OCI-LY7 (cell line): ENCODE measurements at regions of chr3 and their contacts with region 1.

Region 1: DNA sequence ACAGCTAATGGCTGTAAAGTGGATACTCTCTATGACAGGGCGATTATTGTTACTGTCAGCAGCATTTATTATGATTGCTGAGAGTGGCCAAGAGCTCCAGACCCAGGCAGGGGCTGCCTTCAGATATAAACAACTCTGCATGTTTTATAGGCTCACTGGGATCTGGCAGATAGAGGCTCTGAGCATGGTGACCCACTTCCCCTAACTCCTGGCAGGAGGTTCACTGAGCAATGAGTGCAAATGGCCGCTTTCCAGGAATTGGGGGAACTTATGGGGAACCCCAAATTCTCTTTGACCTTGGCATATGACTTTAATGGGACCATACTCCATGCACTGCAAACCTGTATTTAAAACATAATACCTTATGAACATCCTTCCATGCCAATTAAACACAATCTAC is 59.0 kb downstream of the SCN5A start:
- DNase-seq: no peak
- H3K4me3 ChIP-seq: no peak overlapping the region
- H3K27ac ChIP-seq: no peak overlapping the region
- H3K4me1 ChIP-seq: no peaks in the 10 kb centered on the region
- CTCF ChIP-seq: no peak

Region 2: DNA sequence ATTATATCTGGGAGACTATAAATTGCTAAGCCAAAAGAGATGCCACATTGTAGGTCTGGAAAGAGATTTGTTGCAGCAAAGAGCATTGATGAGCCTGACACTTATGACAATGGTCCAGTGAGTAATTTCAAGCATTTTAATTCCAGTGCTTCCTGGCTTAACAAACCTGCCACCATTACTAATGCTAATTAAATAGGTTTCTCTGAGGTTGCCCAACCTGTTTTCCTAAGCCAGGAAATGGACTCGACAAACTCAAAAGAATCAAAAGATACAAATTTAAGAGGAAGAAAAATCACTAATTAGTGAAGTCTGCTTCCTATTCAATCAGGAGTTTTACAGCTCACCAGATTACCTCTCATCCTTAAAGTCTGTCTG is 765.6 kb before region 1 on chr3:
- CTCF ChIA-PET with region 1: no interaction called
- POLR2A ChIA-PET with region 1: no interaction called
- intact Hi-C with region 1: loop called (anchors 10 kb)
- DNase-seq: no peak
- H3K4me3 ChIP-seq: no peak overlapping the region
- H3K27ac ChIP-seq: no peak overlapping the region
- H3K4me1 ChIP-seq: no peaks in the 10 kb centered on the region
- CTCF ChIP-seq: no peak

Region 3: DNA sequence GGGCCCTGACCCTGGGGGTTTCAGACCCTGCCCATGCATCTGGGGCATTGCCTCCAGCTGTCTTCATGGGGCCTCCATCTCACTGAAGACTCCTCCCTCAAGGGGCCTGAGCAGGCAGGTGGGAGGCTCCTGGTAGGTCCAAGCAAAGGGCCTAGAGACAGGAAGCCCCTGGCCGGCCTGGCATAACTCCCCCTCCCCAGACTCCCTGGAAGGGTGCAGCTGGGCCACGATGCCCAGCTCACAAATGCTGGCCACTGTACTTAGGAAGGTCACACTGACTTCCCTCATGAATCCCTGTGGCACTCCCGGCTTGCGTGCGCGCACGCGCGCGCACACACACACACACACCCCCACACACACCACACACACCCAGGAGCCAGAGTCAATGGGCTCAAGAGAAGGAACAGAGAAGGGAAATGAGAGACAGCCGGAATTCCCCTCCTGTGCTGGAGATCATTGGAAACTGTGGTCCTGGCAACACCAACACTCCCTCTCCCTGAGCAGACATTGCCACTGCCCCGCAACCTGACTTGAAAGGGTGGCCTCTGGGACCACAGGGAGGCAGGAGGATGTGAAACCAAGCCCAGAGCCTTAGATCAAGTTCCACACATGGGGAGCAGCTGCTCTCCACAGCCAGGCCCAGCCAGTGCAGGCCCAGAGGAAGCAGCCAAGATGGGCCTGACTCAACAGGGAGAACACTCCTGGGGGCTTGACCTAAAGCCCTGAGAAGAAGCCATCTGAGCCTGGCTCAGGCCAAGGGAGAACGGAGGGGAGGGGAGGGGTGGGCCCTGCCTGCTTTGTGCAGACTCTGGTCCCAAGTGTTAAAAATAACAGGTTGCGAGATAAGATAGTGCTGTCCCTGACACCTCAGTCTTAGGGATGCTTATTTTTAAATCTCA is 10.7 kb before region 1 on chr3:
- CTCF ChIA-PET with region 1: no interaction called
- POLR2A ChIA-PET with region 1: no interaction called
- intact Hi-C with region 1: no loop called
- DNase-seq: peak; percentile 17
- H3K4me3 ChIP-seq: no peak overlapping the region
- H3K27ac ChIP-seq: no peak overlapping the region
- H3K4me1 ChIP-seq: no peaks in the 10 kb centered on the region
- CTCF ChIP-seq: no peak

Region 4: GRCh38 chr3:38689774-38690173 is 99.3 kb after region 1 on chr3:
- CTCF ChIA-PET with region 1: no interaction called
- POLR2A ChIA-PET with region 1: no interaction called
- intact Hi-C with region 1: no loop called
- DNase-seq: no peak
- H3K4me3 ChIP-seq: no peak overlapping the region
- H3K27ac ChIP-seq: no peak overlapping the region
- H3K4me1 ChIP-seq: no peaks in the 10 kb centered on the region
- CTCF ChIP-seq: no peak

Region 5: DNA sequence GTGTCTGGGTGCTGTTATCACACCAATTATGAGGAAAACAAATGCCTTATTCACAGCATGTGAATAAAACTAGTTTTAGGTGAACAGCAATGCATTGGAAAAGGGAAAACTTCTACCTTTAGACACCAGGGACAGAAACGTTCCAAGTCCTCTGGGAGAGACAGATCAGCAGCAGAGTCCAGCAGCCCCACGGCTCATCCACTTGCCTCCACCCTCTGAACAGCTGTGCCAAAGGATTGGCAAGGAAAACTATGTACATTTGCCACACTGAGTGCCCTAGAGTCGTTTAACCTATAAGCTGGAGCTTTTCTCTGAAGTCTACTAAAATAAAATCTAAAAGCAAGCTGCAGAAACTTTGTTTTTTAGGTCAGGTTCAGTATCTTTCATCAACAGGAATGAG is 1611.2 kb after region 1 on chr3:
- CTCF ChIA-PET with region 1: no interaction called
- POLR2A ChIA-PET with region 1: no interaction called
- intact Hi-C with region 1: no loop called
- DNase-seq: no peak
- H3K4me3 ChIP-seq: no peak overlapping the region
- H3K27ac ChIP-seq: no peak overlapping the region
- H3K4me1 ChIP-seq: no peaks in the 10 kb centered on the region
- CTCF ChIP-seq: no peak